GM12878 (cell line): ENCODE measurements at regions of chr3 and their contacts with region 1.

Region 1: GRCh38 chr3:188954590-188955208 is 217.1 kb upstream of the TPRG1 start:
- DNase-seq: peak; percentile 3
- ATAC-seq: peak; percentile 79
- H3K4me3 ChIP-seq: no peak overlapping the region
- H3K27ac ChIP-seq: no peak overlapping the region
- H3K4me1 ChIP-seq: no peaks in the 10 kb centered on the region
- H3K27me3 ChIP-seq: peaks cover 0 to 2% of the 10 kb centered on the region in 2 experiments; a peak in 1 of 4 replicates
- CTCF ChIP-seq: peak; percentile 77 to 82 (median 79)
- EP300 ChIP-seq: no peak
- POLR2A ChIP-seq: no peak
- RAD21 ChIP-seq: peak; percentile 95

Region 2: DNA sequence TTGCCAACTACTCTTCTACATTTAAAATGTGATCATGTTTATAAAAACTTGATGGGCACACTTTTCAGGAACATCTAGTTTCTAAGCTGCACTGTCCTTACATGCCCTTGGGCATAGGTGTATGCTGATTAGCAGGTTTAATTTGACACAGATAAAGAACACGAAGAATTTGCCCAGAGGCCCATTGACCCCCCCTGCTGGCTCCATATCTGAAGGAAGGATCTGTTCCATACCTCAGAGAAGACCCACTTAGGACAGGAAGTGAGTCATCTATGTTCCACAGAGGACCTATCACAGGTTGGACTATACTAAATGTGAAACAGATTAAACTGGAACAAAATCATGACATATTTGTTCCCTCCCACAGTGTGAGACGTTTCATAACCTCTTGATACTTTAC is 893.6 kb before region 1 on chr3:
- CTCF ChIA-PET with region 1: no interaction called
- POLR2A ChIA-PET with region 1: no interaction called
- RAD21 ChIA-PET with region 1: no interaction called
- SMC1A ChIA-PET with region 1: no interaction called
- in situ Hi-C with region 1: no loop called
- intact Hi-C with region 1: loop called (anchors 10 kb)
- DNase-seq: no peak
- ATAC-seq: peak; percentile 54; the same call in 2 of the 3 replicates
- H3K4me3 ChIP-seq: no peak overlapping the region
- H3K27ac ChIP-seq: no peak overlapping the region
- H3K4me1 ChIP-seq: no peaks in the 10 kb centered on the region
- H3K27me3 ChIP-seq: peaks cover 0 to 3% of the 10 kb centered on the region in 2 experiments; a peak in 1 of 4 replicates
- CTCF ChIP-seq: no peak
- EP300 ChIP-seq: no peak
- POLR2A ChIP-seq: no peak
- RAD21 ChIP-seq: 0 out of 2 replicates have a peak, but pooled peaks have one; percentile 7

Region 3: GRCh38 chr3:188749010-188749617 is 205.6 kb before region 1 on chr3:
- CTCF ChIA-PET with region 1: interaction called, 10 read pairs
- POLR2A ChIA-PET with region 1: no interaction called
- RAD21 ChIA-PET with region 1: no interaction called
- SMC1A ChIA-PET with region 1: interaction called, 3 read pairs
- in situ Hi-C with region 1: no loop called
- intact Hi-C with region 1: loop called (anchors 1 kb)
- DNase-seq: no peak
- ATAC-seq: peak; percentile 77
- H3K4me3 ChIP-seq: no peak overlapping the region
- H3K27ac ChIP-seq: no peak overlapping the region
- H3K4me1 ChIP-seq: peaks cover 12% of the 10 kb centered on the region
- H3K27me3 ChIP-seq: peaks cover 0 to 6% of the 10 kb centered on the region in 2 experiments; a peak in 1 of 4 replicates
- CTCF ChIP-seq: peak; percentile 70 to 89 (median 88)
- EP300 ChIP-seq: no peak
- POLR2A ChIP-seq: no peak
- RAD21 ChIP-seq: peak; percentile 69

Region 4: GRCh38 chr3:188830893-188831292 is 123.8 kb before region 1 on chr3:
- CTCF ChIA-PET with region 1: interaction called, 3 read pairs
- POLR2A ChIA-PET with region 1: no interaction called
- RAD21 ChIA-PET with region 1: no interaction called
- SMC1A ChIA-PET with region 1: no interaction called
- in situ Hi-C with region 1: no loop called
- intact Hi-C with region 1: loop called (anchors 2 kb)
- DNase-seq: no peak
- ATAC-seq: no peak
- H3K4me3 ChIP-seq: no peak overlapping the region
- H3K27ac ChIP-seq: no peak overlapping the region
- H3K4me1 ChIP-seq: no peaks in the 10 kb centered on the region
- H3K27me3 ChIP-seq: peaks cover 0 to 2% of the 10 kb centered on the region in 2 experiments; a peak in 1 of 4 replicates
- CTCF ChIP-seq: peak in 2 of 3 experiments; percentile 6 to 29; a peak in 2 of 6 replicates
- EP300 ChIP-seq: no peak
- POLR2A ChIP-seq: no peak
- RAD21 ChIP-seq: no peak

Region 5: GRCh38 chr3:188937389-188937788 is 17.3 kb before region 1 on chr3:
- CTCF ChIA-PET with region 1: interaction called, 64 read pairs
- POLR2A ChIA-PET with region 1: interaction called, 4 read pairs
- RAD21 ChIA-PET with region 1: no interaction called
- SMC1A ChIA-PET with region 1: interaction called, 4 read pairs
- in situ Hi-C with region 1: no loop called
- intact Hi-C with region 1: no loop called
- DNase-seq: no peak
- ATAC-seq: no peak
- H3K4me3 ChIP-seq: no peak overlapping the region
- H3K27ac ChIP-seq: no peak overlapping the region
- H3K4me1 ChIP-seq: no peaks in the 10 kb centered on the region
- H3K27me3 ChIP-seq: 0 out of 4 replicates have a peak, but pooled peaks cover 0 to 3% of the 10 kb centered on the region in 2 experiments
- CTCF ChIP-seq: no peak
- EP300 ChIP-seq: no peak
- POLR2A ChIP-seq: no peak
- RAD21 ChIP-seq: no peak

Region 6: GRCh38 chr3:189148081-189148507 is 193.4 kb after region 1 on chr3:
- CTCF ChIA-PET with region 1: no interaction called
- POLR2A ChIA-PET with region 1: no interaction called
- RAD21 ChIA-PET with region 1: no interaction called
- SMC1A ChIA-PET with region 1: no interaction called
- in situ Hi-C with region 1: no loop called
- intact Hi-C with region 1: loop called (anchors 10 kb)
- DNase-seq: no peak
- ATAC-seq: peak; percentile 87
- H3K4me3 ChIP-seq: no peak overlapping the region
- H3K27ac ChIP-seq: no peak overlapping the region
- H3K4me1 ChIP-seq: no peaks in the 10 kb centered on the region
- H3K27me3 ChIP-seq: peaks cover 0 to 5% of the 10 kb centered on the region in 2 experiments; a peak in 2 of 4 replicates
- CTCF ChIP-seq: peak; percentile 59 to 75 (median 73)
- EP300 ChIP-seq: no peak
- POLR2A ChIP-seq: no peak
- RAD21 ChIP-seq: peak; percentile 80